Esophagus muscularis mucosa (tissue), 4 donors: ENCODE measurements at regions of chr1 and their contacts with region 1.

Region 1: DNA sequence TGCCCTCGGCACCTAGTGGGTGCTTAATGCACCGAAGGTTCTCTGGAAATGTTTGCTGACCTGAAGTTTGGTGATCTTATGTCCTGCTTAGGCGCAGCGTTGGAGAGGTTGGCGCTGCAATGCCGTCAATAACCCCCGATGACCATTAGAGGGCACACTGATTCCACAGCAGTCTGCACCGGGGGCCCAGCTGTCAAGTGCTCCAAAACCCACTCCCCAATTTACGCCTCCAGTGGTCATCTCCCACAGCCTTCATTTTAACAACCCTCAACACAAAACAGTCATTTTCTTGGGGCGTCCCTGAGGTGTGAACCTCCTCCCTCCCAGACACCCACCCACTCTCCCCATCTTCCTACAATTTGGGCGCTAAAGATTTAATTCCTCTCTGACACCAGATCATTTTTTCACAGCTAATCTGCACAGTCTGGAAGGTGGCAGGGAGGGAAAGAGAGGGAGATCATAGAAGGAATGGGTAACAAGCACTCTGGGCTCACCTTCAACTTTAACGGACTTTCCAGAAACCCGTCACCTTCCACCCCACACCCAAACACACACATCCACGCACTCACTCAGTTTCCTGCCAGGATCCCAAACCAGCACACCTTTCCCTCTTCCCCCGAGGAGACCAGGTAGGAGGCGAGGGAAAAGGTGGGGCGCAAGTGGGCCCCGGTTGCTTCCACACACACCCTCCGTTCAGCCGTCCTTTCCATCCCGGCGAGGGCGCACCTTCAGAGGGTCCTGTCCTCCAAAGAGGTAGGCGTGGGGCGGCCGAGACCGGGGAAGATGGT is 576 bp upstream of the NPR1 start:
- DNase-seq: no peak
- H3K4me3 ChIP-seq: peak overlapping the region; percentile 58 to 78 (median 62)
- H3K27ac ChIP-seq: peak overlapping the region; percentile 68 to 79 (median 72)
- H3K4me1 ChIP-seq: peaks cover 21 to 36% (median 35%) of the 10 kb centered on the region in 4 donors
- H3K27me3 ChIP-seq: peaks cover 0 to 29% (median 5%) of the 10 kb centered on the region in 4 donors
- CTCF ChIP-seq: peak; percentile 85 to 93 (median 89)
- EP300 ChIP-seq: no peak
- POLR2A ChIP-seq: no peak

Region 2: GRCh38 chr1:153749408-153750005 is 71.6 kb after region 1 on chr1:
- intact Hi-C with region 1: loop called (anchors 2 kb)
- DNase-seq: peak; percentile 95
- H3K4me3 ChIP-seq: no peak overlapping the region
- H3K27ac ChIP-seq: peak overlapping the region; percentile 46 to 69 (median 64)
- H3K4me1 ChIP-seq: peaks cover 53 to 73% (median 55%) of the 10 kb centered on the region in 4 donors
- H3K27me3 ChIP-seq: no peaks in the 10 kb centered on the region
- CTCF ChIP-seq: peak; percentile 93 to 98 (median 96)
- EP300 ChIP-seq: no peak
- POLR2A ChIP-seq: no peak

Region 3: GRCh38 chr1:153899509-153899908 is 221.6 kb after region 1 on chr1:
- intact Hi-C with region 1: no loop called
- DNase-seq: no peak
- H3K4me3 ChIP-seq: no peak overlapping the region
- H3K27ac ChIP-seq: no peak overlapping the region
- H3K4me1 ChIP-seq: peaks cover 10 to 25% (median 18%) of the 10 kb centered on the region in 4 donors
- H3K27me3 ChIP-seq: no peaks in the 10 kb centered on the region
- CTCF ChIP-seq: no peak
- EP300 ChIP-seq: no peak
- POLR2A ChIP-seq: no peak